Common myeloid progenitor, CD34-positive (primary cell): ENCODE measurements at regions of chr1 and their contacts with region 1.

Region 1: DNA sequence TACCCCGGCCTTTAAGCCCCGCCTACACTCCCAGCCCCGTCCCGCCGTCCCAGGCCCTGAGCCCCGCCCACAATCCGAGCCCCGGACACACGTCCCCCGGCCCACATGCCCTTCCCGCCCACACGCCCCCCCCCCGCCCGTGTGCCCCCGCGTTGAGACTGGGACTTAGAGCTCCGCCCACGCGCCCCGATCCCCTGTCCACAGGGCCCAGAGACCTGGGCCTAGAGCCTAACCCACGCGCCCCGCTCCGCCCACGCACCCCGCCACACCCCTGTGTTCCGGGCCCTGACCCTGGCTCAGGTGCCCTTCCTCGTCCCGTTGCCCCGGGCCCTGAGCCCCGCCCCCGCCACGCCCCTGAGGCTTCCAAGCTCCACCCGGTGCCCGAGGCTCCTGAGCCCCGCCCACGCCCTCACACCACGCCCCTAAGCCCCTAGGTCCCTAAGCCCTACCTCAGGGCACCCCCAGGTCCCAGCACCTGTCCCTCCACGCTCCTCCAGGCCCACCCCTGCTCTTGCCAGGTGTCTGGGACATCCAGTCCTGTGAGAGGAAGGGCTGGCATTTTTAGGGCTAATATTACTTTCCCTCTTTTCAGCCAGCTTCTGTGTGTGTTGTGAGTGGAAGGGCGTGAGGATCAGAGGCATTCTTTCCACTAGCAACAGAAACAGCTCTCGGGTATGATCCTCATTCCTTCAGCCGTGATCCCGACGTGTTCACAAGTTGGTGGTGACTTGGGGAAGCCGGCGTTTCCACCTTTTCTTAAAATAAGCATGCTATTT is 552 bp upstream of the GPR157 start:
- DNase-seq: peak; percentile 86 to 92 (median 90)
- H3K4me3 ChIP-seq: peak overlapping the region in 6 of 7 experiments; percentile 35 to 84 (median 53)
- H3K27ac ChIP-seq: no peak overlapping the region
- H3K4me1 ChIP-seq: peaks cover 0 to 18% (median 14%) of the 10 kb centered on the region in 4 experiments
- H3K27me3 ChIP-seq: peaks cover 0 to 11% (median 0%) of the 10 kb centered on the region in 5 experiments

Region 2: GRCh38 chr1:9143250-9143649 is 13.8 kb after region 1 on chr1:
- CTCF ChIA-PET with region 1: interaction called, 23 read pairs
- POLR2A ChIA-PET with region 1: no interaction called
- DNase-seq: peak in 2 of 3 donors; percentile 10 to 15
- H3K4me3 ChIP-seq: no peak overlapping the region
- H3K27ac ChIP-seq: no peak overlapping the region
- H3K4me1 ChIP-seq: peaks cover 0 to 9% (median 2%) of the 10 kb centered on the region in 4 experiments
- H3K27me3 ChIP-seq: peaks cover 0 to 2% (median 0%) of the 10 kb centered on the region in 5 experiments